Activated CD8-positive, alpha-beta memory T cell treated with anti-CD3 and anti-CD28 coated beads, Interleukin-2, amount 10 ng/mL, durations not matched to agents 7 days and 5 days (primary cell): ENCODE measurements at regions of chr4 and their contacts with region 1.

Region 1: GRCh38 chr4:68375667-68376559 is 26.0 kb upstream of the YTHDC1 start:
- DNase-seq: peak; percentile 64
- ATAC-seq: peak; percentile 88
- H3K4me3 Mint-ChIP-seq: peak overlapping the region; percentile 70
- H3K27ac Mint-ChIP-seq: no peak overlapping the region
- H3K4me1 Mint-ChIP-seq: peaks cover 20% of the 10 kb centered on the region
- H3K27me3 Mint-ChIP-seq: peaks cover 6% of the 10 kb centered on the region

Region 2: DNA sequence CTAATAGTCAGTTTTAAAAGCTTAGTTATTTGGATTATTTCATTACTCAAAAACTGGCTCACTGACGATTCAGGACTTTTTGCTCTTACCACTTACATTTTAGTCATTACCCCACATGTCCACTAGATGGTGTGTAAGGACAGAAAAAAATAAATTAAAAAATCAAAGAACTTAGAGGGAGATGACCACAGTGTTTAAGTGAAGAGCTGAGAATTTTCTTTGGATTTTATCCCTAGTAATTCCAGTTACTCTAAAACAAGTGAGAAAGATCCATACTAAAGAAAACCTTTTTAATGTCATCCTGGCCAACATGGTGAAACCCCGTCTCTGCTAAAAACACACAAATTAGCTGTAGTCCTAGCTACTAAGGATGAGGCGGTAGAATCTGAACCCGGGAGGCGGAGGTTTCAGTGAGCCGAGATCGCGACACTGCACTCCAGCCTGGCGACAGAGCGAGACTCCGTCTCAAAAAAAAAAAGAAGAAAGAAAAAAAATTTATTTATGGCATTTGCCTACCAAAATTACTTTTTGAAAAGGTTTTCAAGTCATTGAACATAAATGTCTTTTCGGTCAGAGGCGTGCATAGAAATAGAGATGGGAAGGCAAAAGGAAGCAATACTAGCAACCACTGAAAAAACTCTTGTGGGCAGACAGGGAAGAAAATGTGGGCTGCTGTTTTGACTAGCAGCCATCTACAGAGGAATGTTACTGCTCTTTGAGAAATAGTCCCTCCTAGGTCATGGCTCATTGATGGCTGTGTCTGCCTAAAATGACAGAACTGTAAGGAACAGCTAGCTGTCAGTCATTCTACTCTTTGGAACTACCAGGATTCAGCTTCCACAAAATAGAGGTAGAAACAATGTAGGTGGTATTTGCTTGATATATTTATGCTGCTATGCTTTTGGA is 103.8 kb before region 1 on chr4:
- CTCF ChIA-PET with region 1: interaction called, 30 read pairs
- DNase-seq: no peak
- ATAC-seq: peak; percentile 53
- H3K4me3 Mint-ChIP-seq: peak overlapping the region; percentile 10
- H3K27ac Mint-ChIP-seq: no peak overlapping the region
- H3K4me1 Mint-ChIP-seq: peaks cover 10% of the 10 kb centered on the region
- H3K27me3 Mint-ChIP-seq: peaks cover 8% of the 10 kb centered on the region

Region 3: GRCh38 chr4:68288393-68288740 is 87.5 kb before region 1 on chr4:
- CTCF ChIA-PET with region 1: no interaction called
- DNase-seq: no peak
- ATAC-seq: no peak
- H3K4me3 Mint-ChIP-seq: no peak overlapping the region
- H3K27ac Mint-ChIP-seq: no peak overlapping the region
- H3K4me1 Mint-ChIP-seq: peaks cover 3% of the 10 kb centered on the region
- H3K27me3 Mint-ChIP-seq: peaks cover 2% of the 10 kb centered on the region